Naive thymus-derived CD4-positive, alpha-beta T cell (primary cell): ENCODE measurements at regions of chr3 and their contacts with region 1.

Region 1: DNA sequence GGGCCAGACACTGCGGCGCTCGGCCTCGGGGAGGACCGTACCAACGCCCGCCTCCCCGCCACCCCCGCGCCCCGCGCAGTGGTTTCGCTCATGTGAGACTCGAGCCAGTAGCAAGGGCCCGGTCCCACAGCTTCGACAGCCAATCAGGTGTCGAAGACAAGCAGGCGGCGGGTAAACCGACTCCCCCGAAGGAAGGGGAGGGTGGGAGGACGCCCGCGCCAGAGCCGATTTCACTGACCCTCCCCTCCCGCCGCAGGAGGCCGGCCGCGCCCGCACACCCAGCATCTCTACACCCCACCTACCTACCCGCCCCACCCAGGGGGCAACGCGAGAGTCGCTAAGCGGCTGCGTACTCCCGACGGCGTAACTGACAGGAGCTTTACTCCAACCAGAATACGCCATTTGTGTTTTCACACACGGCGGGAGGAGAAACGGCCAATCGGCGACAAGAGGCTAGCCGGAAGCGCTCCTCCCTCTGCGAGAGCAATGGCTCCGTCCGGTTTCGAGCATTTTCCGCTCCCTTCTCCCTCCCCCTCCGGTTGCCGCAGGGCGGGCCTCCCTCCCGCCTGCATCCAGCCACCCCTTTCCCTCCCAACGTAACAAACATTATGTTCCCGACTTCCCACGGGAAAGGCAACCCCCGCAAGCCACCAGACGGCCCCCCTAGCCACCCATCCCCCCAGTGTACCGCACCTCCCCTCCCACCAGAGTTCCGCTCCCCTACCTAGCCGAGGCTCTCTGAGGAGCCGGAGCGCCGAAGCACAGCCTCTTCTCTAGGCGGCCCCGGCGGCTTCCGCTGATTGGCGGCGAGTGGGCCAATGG is 504 bp upstream of the SETD5 start:
- DNase-seq: peak; percentile 98 to 100 (median 99)
- ATAC-seq: peak; percentile 82
- H3K4me3 ChIP-seq: peak overlapping the region; percentile 85
- H3K4me3 Mint-ChIP-seq: peak overlapping the region; percentile 89 to 100 (median 96)
- H3K27ac ChIP-seq: peak overlapping the region; percentile 82
- H3K27ac Mint-ChIP-seq: peak overlapping the region; percentile 90 to 100 (median 98)
- H3K4me1 ChIP-seq: peaks cover 46 to 55% of the 10 kb centered on the region in 2 donors
- H3K4me1 Mint-ChIP-seq: peaks cover 59 to 80% (median 75%) of the 10 kb centered on the region in 7 donors
- H3K27me3 ChIP-seq: no peaks in the 10 kb centered on the region
- H3K27me3 Mint-ChIP-seq: peaks cover 0 to 2% (median 0%) of the 10 kb centered on the region in 5 donors

Region 2: DNA sequence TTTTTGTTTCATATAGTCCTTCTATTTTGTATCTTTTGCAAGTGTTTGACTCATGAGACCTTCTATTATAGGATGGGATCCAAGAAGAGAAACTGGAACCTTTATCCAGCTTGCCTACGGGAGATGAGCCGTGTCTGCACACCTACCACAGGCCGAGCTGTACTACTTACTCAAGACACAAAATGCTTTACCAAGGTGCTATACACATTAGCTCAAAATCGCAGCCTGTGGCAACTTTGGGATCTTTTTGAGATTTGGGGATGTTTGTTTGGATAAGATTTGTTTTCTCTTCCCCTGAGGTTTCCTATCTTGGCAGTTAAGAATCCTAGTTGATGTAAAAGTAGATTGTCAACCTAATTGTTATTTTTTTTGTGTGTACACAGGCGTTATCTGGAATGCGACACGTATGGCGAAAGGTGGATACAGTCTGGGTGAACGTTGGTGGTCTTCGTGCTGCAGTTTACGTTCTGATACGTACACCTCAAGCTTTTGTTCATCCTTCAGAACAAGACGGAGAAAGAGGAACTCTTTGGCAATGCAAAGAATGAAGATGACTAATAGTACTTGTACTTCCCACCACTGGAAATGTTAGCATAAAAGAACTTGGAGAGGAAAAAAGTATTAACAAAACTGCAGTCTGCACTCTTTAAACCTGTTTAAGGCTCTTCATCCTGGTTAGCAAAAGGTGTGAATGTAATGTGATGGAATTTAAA is 12.6 kb before region 1 on chr3:
- CTCF ChIA-PET with region 1: no interaction called
- POLR2A ChIA-PET with region 1: interaction called, 39 read pairs
- intact Hi-C with region 1: loop called in 1 of 2 experiments (anchors 1 kb)
- DNase-seq: no peak
- ATAC-seq: no peak
- H3K4me3 ChIP-seq: no peak overlapping the region
- H3K4me3 Mint-ChIP-seq: no peak overlapping the region
- H3K27ac ChIP-seq: no peak overlapping the region
- H3K27ac Mint-ChIP-seq: peak overlapping the region in 8 of 9 donors; percentile 1 to 79 (median 46)
- H3K4me1 ChIP-seq: no peaks in the 10 kb centered on the region
- H3K4me1 Mint-ChIP-seq: peaks cover 5 to 39% (median 23%) of the 10 kb centered on the region in 7 donors
- H3K27me3 ChIP-seq: no peaks in the 10 kb centered on the region
- H3K27me3 Mint-ChIP-seq: no peaks in the 10 kb centered on the region

Region 3: DNA sequence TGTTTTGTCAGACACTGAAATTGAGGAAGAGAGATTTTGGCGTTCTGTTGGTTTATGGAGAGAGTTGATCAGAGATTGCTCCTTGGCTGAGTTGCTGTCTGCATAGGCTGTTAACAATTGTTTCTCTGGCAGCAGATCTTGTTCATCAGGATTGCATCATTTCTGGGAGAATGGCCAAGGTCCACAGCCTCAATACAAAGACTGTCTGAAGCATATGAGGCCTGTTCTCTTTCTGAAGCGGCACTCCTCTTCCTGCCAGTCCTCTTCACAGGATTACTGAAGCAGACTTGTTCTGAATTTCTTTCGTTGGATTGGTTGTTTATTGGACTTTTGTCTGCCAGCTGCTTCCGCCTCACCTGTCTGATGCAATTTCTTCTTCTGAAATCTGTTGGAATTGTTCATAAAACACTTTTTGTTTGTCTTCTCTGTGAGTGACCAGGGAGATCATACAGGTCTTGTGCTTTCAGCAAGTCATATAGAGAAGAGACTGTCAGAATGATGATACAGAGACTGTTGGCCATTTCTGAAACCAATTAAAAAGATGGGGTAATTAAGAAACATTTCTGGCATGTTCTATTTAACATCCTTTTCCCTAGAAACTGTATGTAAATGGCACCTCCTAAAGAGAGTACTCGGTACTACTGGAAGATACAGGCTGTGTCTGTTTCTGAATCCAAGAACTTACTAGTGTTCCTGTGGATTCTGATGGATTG is 26.0 kb after region 1 on chr3:
- CTCF ChIA-PET with region 1: interaction called, 3 read pairs
- POLR2A ChIA-PET with region 1: interaction called, 13 read pairs
- intact Hi-C with region 1: loop called (anchors 1 kb)
- DNase-seq: peak in 7 of 9 donors; percentile 20 to 46 (median 37)
- ATAC-seq: peak; percentile 86
- H3K4me3 ChIP-seq: no peak overlapping the region
- H3K4me3 Mint-ChIP-seq: peak overlapping the region in 4 of 10 donors; percentile 2 to 26 (median 4)
- H3K27ac ChIP-seq: peak overlapping the region; percentile 26
- H3K27ac Mint-ChIP-seq: peak overlapping the region; percentile 23 to 91 (median 84)
- H3K4me1 ChIP-seq: peaks cover 0 to 9% of the 10 kb centered on the region in 2 donors
- H3K4me1 Mint-ChIP-seq: peaks cover 23 to 63% (median 56%) of the 10 kb centered on the region in 7 donors
- H3K27me3 ChIP-seq: no peaks in the 10 kb centered on the region
- H3K27me3 Mint-ChIP-seq: no peaks in the 10 kb centered on the region

Region 4: DNA sequence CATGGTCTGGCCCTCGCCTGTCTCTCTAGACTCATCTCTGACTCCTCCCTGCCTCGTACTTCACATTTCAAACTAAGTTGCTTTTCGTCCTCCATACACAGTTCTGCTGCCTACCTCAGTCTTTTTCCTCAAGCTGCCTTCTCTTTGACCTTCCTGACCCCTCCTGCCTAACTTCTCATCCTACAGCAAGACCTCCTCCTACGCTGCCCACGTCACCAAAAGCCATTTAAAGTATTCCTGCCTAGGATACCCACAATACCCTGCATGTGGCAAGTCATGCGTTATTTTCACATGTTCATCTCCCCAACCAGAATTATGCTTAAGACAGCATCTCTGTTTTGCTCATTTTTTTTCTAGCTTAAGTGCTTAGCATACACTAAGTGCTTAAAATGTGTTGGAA is 100.0 kb after region 1 on chr3:
- CTCF ChIA-PET with region 1: no interaction called
- POLR2A ChIA-PET with region 1: no interaction called
- intact Hi-C with region 1: no loop called
- DNase-seq: no peak
- ATAC-seq: no peak
- H3K4me3 ChIP-seq: no peak overlapping the region
- H3K4me3 Mint-ChIP-seq: no peak overlapping the region
- H3K27ac ChIP-seq: no peak overlapping the region
- H3K27ac Mint-ChIP-seq: no peak overlapping the region
- H3K4me1 ChIP-seq: peaks cover 7 to 11% of the 10 kb centered on the region in 2 donors
- H3K4me1 Mint-ChIP-seq: peaks cover 4 to 9% (median 6%) of the 10 kb centered on the region in 7 donors
- H3K27me3 ChIP-seq: peaks cover 5 to 15% of the 10 kb centered on the region in 2 donors
- H3K27me3 Mint-ChIP-seq: peaks cover 15 to 25% (median 22%) of the 10 kb centered on the region in 5 donors

Region 5: GRCh38 chr3:9649791-9650521 is 253.0 kb after region 1 on chr3:
- CTCF ChIA-PET with region 1: no interaction called
- POLR2A ChIA-PET with region 1: interaction called, 14 read pairs
- intact Hi-C with region 1: loop called (anchors 1 kb)
- DNase-seq: peak in 2 of 9 donors; percentile 4 to 5
- ATAC-seq: peak; percentile 15
- H3K4me3 ChIP-seq: peak overlapping the region; percentile 97
- H3K4me3 Mint-ChIP-seq: peak overlapping the region; percentile 86 to 98 (median 95)
- H3K27ac ChIP-seq: peak overlapping the region; percentile 85
- H3K27ac Mint-ChIP-seq: peak overlapping the region; percentile 91 to 98 (median 97)
- H3K4me1 ChIP-seq: peaks cover 15 to 19% of the 10 kb centered on the region in 2 donors
- H3K4me1 Mint-ChIP-seq: peaks cover 19 to 51% (median 37%) of the 10 kb centered on the region in 7 donors
- H3K27me3 ChIP-seq: no peaks in the 10 kb centered on the region
- H3K27me3 Mint-ChIP-seq: peaks cover 0 to 3% (median 0%) of the 10 kb centered on the region in 5 donors

Region 6: DNA sequence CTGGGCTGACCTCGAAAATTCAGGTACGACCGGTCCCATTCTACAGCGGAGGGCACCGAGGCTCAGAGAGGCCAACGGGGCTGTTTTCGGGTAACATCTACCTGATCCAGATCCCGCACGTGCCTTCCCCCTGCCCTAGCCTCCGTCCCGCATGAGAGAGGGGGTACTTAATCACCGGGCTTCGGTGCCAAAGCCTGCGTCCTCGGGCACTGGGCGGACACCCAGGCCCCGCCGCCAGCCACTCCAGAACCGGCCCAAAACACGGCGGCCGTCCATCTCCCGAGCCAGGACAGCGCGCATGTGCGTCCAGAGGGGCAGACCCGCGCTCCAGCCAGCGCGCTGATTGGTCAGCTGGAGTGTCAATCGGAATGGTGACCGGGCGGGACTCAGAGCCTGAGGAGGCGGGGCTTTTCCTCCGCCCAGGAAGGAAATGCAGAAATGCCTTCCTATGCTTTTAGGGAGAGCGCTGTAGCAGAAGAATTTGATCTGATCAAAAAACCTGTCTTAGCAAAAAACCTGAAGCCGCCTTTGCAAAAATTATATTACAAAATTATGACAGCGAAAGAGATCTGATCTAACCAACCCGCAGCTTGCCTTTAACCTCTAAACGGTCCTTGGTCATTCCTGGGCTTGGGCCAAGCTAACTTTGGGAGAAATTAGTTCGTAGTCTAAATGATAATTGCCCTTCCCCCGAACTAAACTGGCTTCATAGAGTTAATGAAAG is 447.0 kb after region 1 on chr3 and contains the start of gene RPUSD3:
- CTCF ChIA-PET with region 1: no interaction called
- POLR2A ChIA-PET with region 1: no interaction called
- intact Hi-C with region 1: loop called in 1 of 2 experiments (anchors 1 kb)
- DNase-seq: peak; percentile 90 to 99 (median 94)
- ATAC-seq: peak; percentile 100
- H3K4me3 ChIP-seq: peak within 1 kb of the TSS; percentile 83
- H3K4me3 Mint-ChIP-seq: peak within 1 kb of the TSS; percentile 93 to 100 (median 97)
- H3K27ac ChIP-seq: peak within 1 kb of the TSS; percentile 82
- H3K27ac Mint-ChIP-seq: peak within 1 kb of the TSS; percentile 68 to 94 (median 91)
- H3K4me1 ChIP-seq: peaks cover 4 to 5% of the 10 kb centered on the region in 2 donors
- H3K4me1 Mint-ChIP-seq: peaks cover 12 to 40% (median 23%) of the 10 kb centered on the region in 7 donors
- H3K27me3 ChIP-seq: no peaks in the 10 kb centered on the region
- H3K27me3 Mint-ChIP-seq: no peaks in the 10 kb centered on the region
- total RNA-seq, gene RPUSD3: 17.7 to 61.2 (median 58.0) TPM

Region 7: GRCh38 chr3:10248184-10249080 is 851.5 kb after region 1 on chr3 and contains the start of gene TATDN2:
- CTCF ChIA-PET with region 1: no interaction called
- POLR2A ChIA-PET with region 1: no interaction called
- intact Hi-C with region 1: loop called (anchors 2 kb)
- DNase-seq: peak; percentile 80 to 91 (median 88)
- ATAC-seq: peak; percentile 98
- H3K4me3 ChIP-seq: peak within 1 kb of the TSS; percentile 99
- H3K4me3 Mint-ChIP-seq: peak within 1 kb of the TSS; percentile 96 to 100 (median 99)
- H3K27ac ChIP-seq: peak within 1 kb of the TSS; percentile 80
- H3K27ac Mint-ChIP-seq: peak within 1 kb of the TSS; percentile 91 to 97 (median 95)
- H3K4me1 ChIP-seq: peaks cover 28 to 30% of the 10 kb centered on the region in 2 donors
- H3K4me1 Mint-ChIP-seq: peaks cover 44 to 63% (median 52%) of the 10 kb centered on the region in 7 donors
- H3K27me3 ChIP-seq: no peaks in the 10 kb centered on the region
- H3K27me3 Mint-ChIP-seq: no peaks in the 10 kb centered on the region
- total RNA-seq, gene TATDN2: 52.9 to 88.8 (median 71.6) TPM